Sigmoid colon (tissue), 7 donors: ENCODE measurements at regions of chr14 and their contacts with region 1.

Region 1: GRCh38 chr14:74038015-74038859 is 19.1 kb downstream of the BBOF1 start:
- DNase-seq: no peak
- H3K4me3 ChIP-seq: no peak overlapping the region
- H3K27ac ChIP-seq: no peak overlapping the region
- H3K4me1 ChIP-seq: no peaks in the 10 kb centered on the region
- H3K27me3 ChIP-seq: no peaks in the 10 kb centered on the region
- CTCF ChIP-seq: peak; percentile 17 to 60 (median 52)
- EP300 ChIP-seq: no peak
- POLR2A ChIP-seq: no peak

Region 2: GRCh38 chr14:73771848-73772638 is 266.2 kb before region 1 on chr14:
- intact Hi-C with region 1: no loop called
- DNase-seq: no peak
- H3K4me3 ChIP-seq: no peak overlapping the region
- H3K27ac ChIP-seq: peak overlapping the region; percentile 63 to 78 (median 70)
- H3K4me1 ChIP-seq: peaks cover 0 to 96% (median 88%) of the 10 kb centered on the region in 4 donors
- H3K27me3 ChIP-seq: no peaks in the 10 kb centered on the region
- CTCF ChIP-seq: no peak
- EP300 ChIP-seq: no peak
- POLR2A ChIP-seq: no peak

Region 3: GRCh38 chr14:73949744-73950734 is 88.2 kb before region 1 on chr14 and contains the starts of genes COQ6 and FAM161B:
- intact Hi-C with region 1: loop called (anchors 5 kb)
- DNase-seq: peak; percentile 98
- H3K4me3 ChIP-seq: peak within 1 kb of the TSS; percentile 58 to 98 (median 76)
- H3K27ac ChIP-seq: peak within 1 kb of the TSS; percentile 86 to 96 (median 92)
- H3K4me1 ChIP-seq: peaks cover 0 to 22% (median 16%) of the 10 kb centered on the region in 4 donors
- H3K27me3 ChIP-seq: no peaks in the 10 kb centered on the region
- CTCF ChIP-seq: no peak
- EP300 ChIP-seq: no peak
- POLR2A ChIP-seq: peak; percentile 73 to 74
- total RNA-seq, gene COQ6: 23.8 to 31.6 (median 30.6) TPM
- total RNA-seq, gene FAM161B: 3.8 to 5.3 (median 4.5) TPM

Region 4: DNA sequence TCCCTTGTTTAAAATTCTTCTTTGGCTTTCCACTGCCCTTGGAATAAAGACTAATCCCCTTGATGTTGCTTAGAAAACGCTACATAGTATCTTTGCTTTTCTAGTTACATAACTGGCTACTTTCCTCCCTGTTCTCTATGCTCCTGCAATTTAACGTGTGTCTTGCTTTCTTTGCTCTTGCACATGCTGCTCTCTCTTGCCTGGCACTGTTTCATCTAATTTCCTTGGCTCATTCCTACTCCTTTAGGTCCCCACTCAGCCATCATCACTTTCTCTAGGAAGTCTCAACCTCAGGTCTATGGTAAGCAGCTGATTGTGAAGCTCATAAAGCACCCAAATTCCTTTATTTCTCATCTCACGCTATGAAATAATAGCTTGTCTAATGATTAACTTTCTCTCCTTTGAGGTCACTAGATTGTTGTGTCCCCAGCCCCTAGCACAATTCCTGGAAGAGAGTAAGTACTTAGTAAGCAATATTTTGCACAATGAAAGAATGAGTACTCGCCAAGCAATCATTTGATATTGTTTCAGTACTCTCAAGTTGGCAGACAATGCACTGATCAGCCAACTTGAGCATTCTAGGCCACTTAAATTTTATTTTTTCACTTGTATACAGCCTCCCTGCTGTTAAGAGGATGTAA is 42.7 kb after region 1 on chr14:
- intact Hi-C with region 1: no loop called
- DNase-seq: no peak
- H3K4me3 ChIP-seq: no peak overlapping the region
- H3K27ac ChIP-seq: no peak overlapping the region
- H3K4me1 ChIP-seq: peaks cover 0 to 20% (median 18%) of the 10 kb centered on the region in 4 donors
- H3K27me3 ChIP-seq: no peaks in the 10 kb centered on the region
- CTCF ChIP-seq: no peak
- EP300 ChIP-seq: no peak
- POLR2A ChIP-seq: no peak